B cell (primary cell): ENCODE measurements at regions of chr14 and their contacts with region 1.

Region 1: GRCh38 chr14:77067632-77068514 is 30.2 kb upstream of the CIPC start:
- DNase-seq: peak; percentile 69
- ATAC-seq: peak; percentile 66
- H3K4me3 ChIP-seq: no peak overlapping the region
- H3K4me3 Mint-ChIP-seq: no peak overlapping the region
- H3K27ac ChIP-seq: no peak overlapping the region
- H3K27ac Mint-ChIP-seq: no peak overlapping the region
- H3K4me1 ChIP-seq: peaks cover 22 to 32% of the 10 kb centered on the region in 2 donors
- H3K4me1 Mint-ChIP-seq: peaks cover 24% of the 10 kb centered on the region
- H3K27me3 ChIP-seq: peaks cover 0 to 22% (median 3%) of the 10 kb centered on the region in 4 experiments
- H3K27me3 Mint-ChIP-seq: no peaks in the 10 kb centered on the region
- CTCF ChIP-seq: peak; percentile 76

Region 2: GRCh38 chr14:76812211-76813044 is 255.4 kb before region 1 on chr14 and contains the start of gene ANGEL1:
- CTCF ChIA-PET with region 1: interaction called, 12 read pairs
- POLR2A ChIA-PET with region 1: no interaction called
- intact Hi-C with region 1: no loop called
- DNase-seq: peak; percentile 99
- ATAC-seq: peak; percentile 95
- H3K4me3 ChIP-seq: peak within 1 kb of the TSS; percentile 31 to 79 (median 72)
- H3K4me3 Mint-ChIP-seq: peak within 1 kb of the TSS; percentile 90
- H3K27ac ChIP-seq: peak within 1 kb of the TSS; percentile 65 to 84
- H3K27ac Mint-ChIP-seq: peak within 1 kb of the TSS; percentile 99
- H3K4me1 ChIP-seq: peaks cover 20 to 25% of the 10 kb centered on the region in 2 donors
- H3K4me1 Mint-ChIP-seq: peaks cover 28% of the 10 kb centered on the region
- H3K27me3 ChIP-seq: peaks cover 0 to 5% (median 2%) of the 10 kb centered on the region in 4 experiments
- H3K27me3 Mint-ChIP-seq: no peaks in the 10 kb centered on the region
- CTCF ChIP-seq: no peak
- total RNA-seq, gene ANGEL1: 25.2 and 27.3 TPM in 2 replicates

Region 3: GRCh38 chr14:76904740-76905438 is 163.0 kb before region 1 on chr14:
- CTCF ChIA-PET with region 1: interaction called, 267 read pairs
- POLR2A ChIA-PET with region 1: no interaction called
- intact Hi-C with region 1: no loop called
- DNase-seq: peak; percentile 91
- ATAC-seq: peak; percentile 83
- H3K4me3 ChIP-seq: peak overlapping the region in 1 of 5 experiments; percentile 36
- H3K4me3 Mint-ChIP-seq: peak overlapping the region; percentile 55
- H3K27ac ChIP-seq: peak overlapping the region; percentile 57 to 76
- H3K27ac Mint-ChIP-seq: peak overlapping the region; percentile 89
- H3K4me1 ChIP-seq: peaks cover 29 to 45% of the 10 kb centered on the region in 2 donors
- H3K4me1 Mint-ChIP-seq: peaks cover 34% of the 10 kb centered on the region
- H3K27me3 ChIP-seq: peaks cover 0 to 6% (median 0%) of the 10 kb centered on the region in 4 experiments
- H3K27me3 Mint-ChIP-seq: no peaks in the 10 kb centered on the region
- CTCF ChIP-seq: no peak

Region 4: GRCh38 chr14:76962303-76962660 is 105.6 kb before region 1 on chr14:
- CTCF ChIA-PET with region 1: interaction called, 10 read pairs
- POLR2A ChIA-PET with region 1: no interaction called
- intact Hi-C with region 1: no loop called
- DNase-seq: no peak
- ATAC-seq: no peak
- H3K4me3 ChIP-seq: peak overlapping the region; percentile 22 to 57 (median 32)
- H3K4me3 Mint-ChIP-seq: peak overlapping the region; percentile 87
- H3K27ac ChIP-seq: peak overlapping the region; percentile 83 to 85
- H3K27ac Mint-ChIP-seq: peak overlapping the region; percentile 95
- H3K4me1 ChIP-seq: peaks cover 44 to 71% of the 10 kb centered on the region in 2 donors
- H3K4me1 Mint-ChIP-seq: peaks cover 72% of the 10 kb centered on the region
- H3K27me3 ChIP-seq: no peaks in the 10 kb centered on the region
- H3K27me3 Mint-ChIP-seq: no peaks in the 10 kb centered on the region
- CTCF ChIP-seq: no peak

Region 5: DNA sequence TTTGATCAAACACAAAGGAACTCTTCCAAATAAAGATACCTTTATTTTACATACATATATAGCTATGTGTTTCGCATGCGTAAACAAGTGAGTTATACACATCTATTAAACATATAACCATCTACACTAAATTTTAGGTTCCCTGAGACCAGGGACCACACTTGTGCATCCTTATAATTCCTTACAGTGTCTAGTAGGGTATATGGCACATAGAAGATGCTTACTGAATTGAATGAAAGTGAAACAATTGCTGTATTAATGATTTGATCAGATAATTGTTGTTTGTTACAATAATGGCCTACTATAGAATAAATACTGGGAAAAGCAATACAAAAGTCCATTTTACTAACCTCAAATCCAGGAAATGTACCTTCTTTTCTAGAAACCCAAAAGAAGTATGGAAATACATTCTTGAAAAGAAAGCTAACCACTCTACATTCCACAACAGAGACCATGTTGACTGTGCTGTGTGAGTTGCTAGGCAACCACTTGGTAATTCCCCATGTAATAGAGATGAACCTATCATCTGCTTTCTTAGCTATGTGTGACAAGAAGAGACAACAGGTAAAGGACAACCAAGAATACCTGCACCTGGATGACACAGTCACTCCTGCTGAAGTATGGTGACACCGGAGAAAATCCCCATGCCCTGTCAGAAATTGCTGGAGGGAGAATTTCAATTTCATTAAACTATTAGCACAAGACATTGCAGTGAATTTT is 18.3 kb after region 1 on chr14:
- CTCF ChIA-PET with region 1: interaction called, 55 read pairs
- POLR2A ChIA-PET with region 1: interaction called, 4 read pairs
- intact Hi-C with region 1: no loop called
- DNase-seq: peak; percentile 56
- ATAC-seq: peak; percentile 78
- H3K4me3 ChIP-seq: no peak overlapping the region
- H3K4me3 Mint-ChIP-seq: no peak overlapping the region
- H3K27ac ChIP-seq: peak overlapping the region in 1 of 2 donors; percentile 33
- H3K27ac Mint-ChIP-seq: peak overlapping the region; percentile 32
- H3K4me1 ChIP-seq: peaks cover 0 to 7% of the 10 kb centered on the region in 2 donors
- H3K4me1 Mint-ChIP-seq: peaks cover 26% of the 10 kb centered on the region
- H3K27me3 ChIP-seq: no peaks in the 10 kb centered on the region
- H3K27me3 Mint-ChIP-seq: peaks cover 5% of the 10 kb centered on the region
- CTCF ChIP-seq: no peak

Region 6: DNA sequence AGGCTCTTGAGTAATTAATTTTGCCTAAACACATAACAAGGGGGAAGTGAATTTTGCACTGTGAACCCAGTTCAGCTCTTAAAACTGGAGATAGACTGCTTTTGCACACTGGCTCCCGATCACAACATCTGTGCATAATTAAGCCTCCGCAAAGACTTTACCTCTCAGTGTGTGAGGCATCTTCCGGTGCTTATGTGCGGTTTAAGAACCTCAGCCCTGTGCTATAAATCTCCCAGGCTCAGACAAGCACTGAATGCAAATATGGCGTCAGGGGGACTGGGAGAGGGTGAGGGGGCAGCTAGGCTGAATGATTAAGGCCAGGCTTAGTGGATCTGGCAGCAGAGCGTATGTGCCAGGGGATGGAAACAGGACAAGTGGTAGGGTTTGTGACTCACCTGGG is 835.3 kb after region 1 on chr14:
- CTCF ChIA-PET with region 1: no interaction called
- POLR2A ChIA-PET with region 1: no interaction called
- intact Hi-C with region 1: no loop called
- DNase-seq: no peak
- ATAC-seq: no peak
- H3K4me3 ChIP-seq: no peak overlapping the region
- H3K4me3 Mint-ChIP-seq: no peak overlapping the region
- H3K27ac ChIP-seq: no peak overlapping the region
- H3K27ac Mint-ChIP-seq: no peak overlapping the region
- H3K4me1 ChIP-seq: no peaks in the 10 kb centered on the region
- H3K4me1 Mint-ChIP-seq: no peaks in the 10 kb centered on the region
- H3K27me3 ChIP-seq: no peaks in the 10 kb centered on the region
- H3K27me3 Mint-ChIP-seq: no peaks in the 10 kb centered on the region
- CTCF ChIP-seq: no peak